Common myeloid progenitor, CD34-positive (primary cell): ENCODE measurements at regions of chr17 and their contacts with region 1.

Region 1: GRCh38 chr17:34361478-34362061 is 1.5 kb downstream of the CCL1 start:
- DNase-seq: peak; percentile 90 to 95 (median 93)
- H3K4me3 ChIP-seq: no peak overlapping the region
- H3K27ac ChIP-seq: no peak overlapping the region
- H3K4me1 ChIP-seq: peaks cover 17 to 53% (median 41%) of the 10 kb centered on the region in 4 experiments
- H3K27me3 ChIP-seq: no peaks in the 10 kb centered on the region

Region 2: GRCh38 chr17:33964344-33964979 is 397.1 kb before region 1 on chr17:
- CTCF ChIA-PET with region 1: interaction called, 10 read pairs
- POLR2A ChIA-PET with region 1: no interaction called
- DNase-seq: peak; percentile 86 to 96 (median 94)
- H3K4me3 ChIP-seq: peak overlapping the region in 2 of 7 experiments; percentile 26 to 29
- H3K27ac ChIP-seq: peak overlapping the region in 1 of 2 experiments; percentile 9
- H3K4me1 ChIP-seq: peaks cover 26 to 79% (median 72%) of the 10 kb centered on the region in 4 experiments
- H3K27me3 ChIP-seq: no peaks in the 10 kb centered on the region

Region 3: DNA sequence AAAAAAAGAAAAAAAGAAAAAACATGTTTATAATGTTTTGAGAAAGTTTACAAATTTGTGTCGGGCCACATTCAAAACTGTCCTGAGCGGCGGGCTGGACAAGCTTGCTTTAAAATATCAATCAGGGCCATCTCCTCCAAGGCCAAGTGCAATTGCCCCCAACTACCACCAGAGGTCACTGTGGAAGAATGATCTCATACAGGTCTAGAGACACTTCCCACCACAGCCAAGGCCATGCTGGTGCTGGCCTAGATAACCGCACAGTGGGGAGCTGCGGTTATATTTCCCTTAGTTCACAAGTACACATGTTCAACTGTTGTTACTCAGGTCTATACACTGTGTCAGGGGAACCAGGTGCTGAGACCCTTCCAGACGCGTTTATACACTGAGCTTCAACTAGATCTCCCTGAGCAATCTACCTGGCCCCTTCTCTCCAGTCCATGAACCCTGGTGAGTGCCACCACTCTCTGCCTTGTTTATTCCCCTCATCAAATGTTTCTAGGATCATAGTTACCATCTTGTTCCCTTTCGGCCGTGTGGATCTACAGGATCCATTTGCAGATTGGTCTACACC is 190.2 kb before region 1 on chr17:
- CTCF ChIA-PET with region 1: interaction called, 26 read pairs
- POLR2A ChIA-PET with region 1: no interaction called
- DNase-seq: peak; percentile 88 to 96 (median 96)
- H3K4me3 ChIP-seq: no peak overlapping the region
- H3K27ac ChIP-seq: no peak overlapping the region
- H3K4me1 ChIP-seq: peaks cover 0 to 22% (median 12%) of the 10 kb centered on the region in 4 experiments
- H3K27me3 ChIP-seq: no peaks in the 10 kb centered on the region

Region 4: GRCh38 chr17:34235389-34236028 is 126.1 kb before region 1 on chr17:
- CTCF ChIA-PET with region 1: interaction called, 15 read pairs
- POLR2A ChIA-PET with region 1: interaction called, 3 read pairs
- DNase-seq: peak in 1 of 3 donors; percentile 54
- H3K4me3 ChIP-seq: no peak overlapping the region
- H3K27ac ChIP-seq: no peak overlapping the region
- H3K4me1 ChIP-seq: peaks cover 3 to 63% (median 56%) of the 10 kb centered on the region in 4 experiments
- H3K27me3 ChIP-seq: no peaks in the 10 kb centered on the region

Region 5: GRCh38 chr17:34349751-34350150 is 11.8 kb before region 1 on chr17:
- CTCF ChIA-PET with region 1: interaction called, 13 read pairs
- POLR2A ChIA-PET with region 1: interaction called, 4 read pairs
- DNase-seq: no peak
- H3K4me3 ChIP-seq: no peak overlapping the region
- H3K27ac ChIP-seq: no peak overlapping the region
- H3K4me1 ChIP-seq: no peaks in the 10 kb centered on the region
- H3K27me3 ChIP-seq: peaks cover 0 to 4% (median 0%) of the 10 kb centered on the region in 5 experiments

Region 6: GRCh38 chr17:34420254-34420766 is 58.7 kb after region 1 on chr17:
- CTCF ChIA-PET with region 1: interaction called, 20 read pairs
- POLR2A ChIA-PET with region 1: no interaction called
- DNase-seq: peak; percentile 63 to 72 (median 66)
- H3K4me3 ChIP-seq: no peak overlapping the region
- H3K27ac ChIP-seq: no peak overlapping the region
- H3K4me1 ChIP-seq: peaks cover 0 to 6% (median 2%) of the 10 kb centered on the region in 4 experiments
- H3K27me3 ChIP-seq: peaks cover 0 to 32% (median 22%) of the 10 kb centered on the region in 5 experiments